ENCODE measurements at regions of chrX and their contacts with region 1.

Region 1: DNA sequence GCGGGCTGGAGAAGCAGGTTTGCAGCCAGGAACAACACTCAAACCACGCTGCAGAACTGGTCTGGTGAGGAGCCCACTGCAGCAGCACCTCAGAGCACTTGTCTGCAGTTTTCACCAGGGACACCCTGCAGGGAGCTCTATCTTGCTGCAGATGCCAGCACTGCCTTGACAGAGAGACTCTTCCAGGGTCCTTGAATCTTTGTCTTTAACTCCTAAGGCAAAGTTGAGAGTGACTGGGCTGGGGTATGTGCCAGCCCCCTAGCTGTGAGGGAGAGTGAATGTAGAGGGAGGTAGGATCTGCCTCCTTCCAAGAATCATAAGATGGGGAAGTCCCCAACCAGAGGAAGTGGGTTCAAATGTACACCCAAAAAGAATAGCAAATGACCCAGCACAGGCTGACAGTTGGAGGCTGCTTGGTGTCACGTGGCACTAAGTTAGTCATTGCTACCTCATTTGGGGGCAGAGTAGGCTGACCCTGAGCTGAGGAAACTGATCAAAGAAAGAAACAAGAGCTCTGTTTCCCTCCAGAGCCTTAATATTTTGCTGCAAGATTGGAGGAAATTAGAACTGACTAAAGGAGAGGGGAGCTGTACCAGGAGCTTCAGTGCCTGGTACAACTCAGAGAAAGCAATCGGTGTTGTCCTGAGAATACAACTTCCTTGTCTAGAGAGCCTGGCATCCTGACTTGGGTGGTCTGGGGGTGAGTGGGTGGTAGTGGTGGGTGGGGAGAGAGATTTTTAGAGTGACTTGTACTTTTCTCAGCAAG is 28.2 kb upstream of the HUWE1 start:
- DNase-seq: peak; percentile 91
- H3K4me3 Mint-ChIP-seq: peak overlapping the region; percentile 85
- H3K27ac Mint-ChIP-seq: peak overlapping the region; percentile 99
- H3K4me1 Mint-ChIP-seq: peaks cover 41% of the 10 kb centered on the region
- H3K27me3 Mint-ChIP-seq: no peaks in the 10 kb centered on the region

Region 2: DNA sequence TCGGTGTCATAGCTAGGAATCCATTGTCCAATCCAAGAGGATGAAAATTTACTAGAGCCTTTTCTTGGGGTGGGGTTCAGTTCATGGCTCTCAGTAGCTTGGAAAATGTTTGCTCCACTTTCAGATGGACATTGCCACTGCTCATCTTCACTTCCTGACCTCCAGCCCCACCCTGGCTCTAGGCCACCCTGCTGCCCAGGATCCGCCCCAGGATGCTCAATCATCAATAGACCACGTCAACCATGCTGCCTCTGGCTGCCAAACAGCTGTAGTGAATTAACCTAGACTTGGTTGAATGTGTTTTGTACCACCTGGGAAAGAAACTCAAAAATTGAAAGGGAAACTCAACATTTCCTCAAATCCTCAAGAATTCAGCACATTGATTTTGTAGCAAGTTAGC is 243.4 kb before region 1 on chrX:
- intact Hi-C with region 1: no loop called
- DNase-seq: no peak
- H3K4me3 Mint-ChIP-seq: no peak overlapping the region
- H3K27ac Mint-ChIP-seq: no peak overlapping the region
- H3K4me1 Mint-ChIP-seq: no peaks in the 10 kb centered on the region
- H3K27me3 Mint-ChIP-seq: no peaks in the 10 kb centered on the region

Region 3: GRCh38 chrX:53732797-53733196 is 18.0 kb after region 1 on chrX:
- intact Hi-C with region 1: loop called (anchors 1 kb)
- DNase-seq: no peak
- H3K4me3 Mint-ChIP-seq: peak overlapping the region; percentile 73
- H3K27ac Mint-ChIP-seq: peak overlapping the region; percentile 94
- H3K4me1 Mint-ChIP-seq: peaks cover 31% of the 10 kb centered on the region
- H3K27me3 Mint-ChIP-seq: no peaks in the 10 kb centered on the region

Region 4: GRCh38 chrX:53743244-53743643 is 28.5 kb after region 1 on chrX:
- intact Hi-C with region 1: loop called (anchors 1 kb)
- DNase-seq: no peak
- H3K4me3 Mint-ChIP-seq: no peak overlapping the region
- H3K27ac Mint-ChIP-seq: no peak overlapping the region
- H3K4me1 Mint-ChIP-seq: peaks cover 6% of the 10 kb centered on the region
- H3K27me3 Mint-ChIP-seq: no peaks in the 10 kb centered on the region

Region 5: DNA sequence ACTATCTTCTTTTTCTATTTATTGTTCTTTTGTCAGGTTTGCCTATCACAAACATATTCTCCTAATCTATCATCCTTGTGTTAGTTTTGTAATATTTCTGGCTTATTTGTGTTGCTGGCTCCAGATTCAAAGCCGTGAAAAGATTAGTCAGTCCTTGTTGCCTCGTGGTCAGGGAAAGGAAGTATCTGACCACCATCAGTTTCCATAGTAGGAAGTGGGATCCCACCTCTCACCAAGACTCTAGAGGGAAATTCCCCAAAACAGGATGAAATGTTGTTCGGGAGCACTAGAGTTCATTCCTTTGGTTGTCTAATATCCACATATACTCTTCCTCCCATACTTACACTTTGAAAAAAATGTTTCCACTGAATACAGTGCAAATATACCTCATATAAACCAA is 102.8 kb after region 1 on chrX:
- intact Hi-C with region 1: loop called (anchors 5 kb)
- DNase-seq: no peak
- H3K4me3 Mint-ChIP-seq: peak overlapping the region; percentile 33
- H3K27ac Mint-ChIP-seq: peak overlapping the region; percentile 49
- H3K4me1 Mint-ChIP-seq: peaks cover 14% of the 10 kb centered on the region
- H3K27me3 Mint-ChIP-seq: no peaks in the 10 kb centered on the region

Region 6: DNA sequence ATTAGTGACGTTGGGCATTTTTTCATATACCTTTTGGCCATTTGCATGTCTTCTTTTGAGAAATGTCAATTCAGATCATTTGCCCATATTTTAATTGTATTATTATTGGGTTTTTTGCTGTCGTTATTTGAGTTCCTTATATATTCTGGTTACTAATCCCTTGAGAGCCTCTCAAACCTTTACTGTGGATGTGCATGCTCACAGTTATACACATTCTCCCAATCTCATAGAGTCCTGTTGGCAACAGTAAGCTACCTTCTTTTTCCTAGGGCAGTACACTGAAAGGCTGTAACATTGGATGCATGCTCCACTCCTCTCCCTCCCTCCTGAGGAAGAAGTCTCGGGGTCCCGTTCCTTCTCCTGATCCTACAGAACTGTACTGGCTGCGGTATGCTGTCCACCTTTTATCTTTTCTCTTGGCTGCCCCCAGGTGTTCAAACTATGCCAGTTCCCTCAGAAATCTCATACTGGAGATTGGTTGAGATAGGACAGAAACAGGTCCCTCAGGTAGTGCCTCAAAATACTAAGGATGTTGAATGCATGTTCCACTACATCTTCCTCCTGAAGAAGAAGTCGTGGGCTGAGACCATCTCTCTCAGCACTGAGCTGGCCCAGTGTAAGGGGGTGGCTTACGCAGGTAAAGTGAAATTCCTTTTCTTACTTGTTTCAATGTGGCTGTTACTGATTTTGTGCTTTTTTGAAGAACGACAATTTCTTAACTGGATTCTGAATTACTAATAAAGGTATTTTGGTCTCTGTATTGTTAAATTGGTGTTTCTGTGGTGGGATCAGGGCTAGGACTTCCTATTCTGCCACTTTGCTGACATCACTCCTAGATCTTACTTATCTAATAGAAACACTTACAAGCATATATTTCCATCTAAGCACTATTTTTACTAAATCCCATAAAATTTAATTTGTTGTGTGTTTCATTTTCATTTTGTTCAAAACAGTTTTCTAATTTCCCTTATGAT is 117.2 kb after region 1 on chrX:
- intact Hi-C with region 1: loop called (anchors 5 kb)
- DNase-seq: peak; percentile 85
- H3K4me3 Mint-ChIP-seq: peak overlapping the region; percentile 64
- H3K27ac Mint-ChIP-seq: peak overlapping the region; percentile 62
- H3K4me1 Mint-ChIP-seq: peaks cover 10% of the 10 kb centered on the region
- H3K27me3 Mint-ChIP-seq: no peaks in the 10 kb centered on the region